Naive thymus-derived CD4-positive, alpha-beta T cell (primary cell): ENCODE measurements at regions of chr11 and their contacts with region 1.

Region 1: DNA sequence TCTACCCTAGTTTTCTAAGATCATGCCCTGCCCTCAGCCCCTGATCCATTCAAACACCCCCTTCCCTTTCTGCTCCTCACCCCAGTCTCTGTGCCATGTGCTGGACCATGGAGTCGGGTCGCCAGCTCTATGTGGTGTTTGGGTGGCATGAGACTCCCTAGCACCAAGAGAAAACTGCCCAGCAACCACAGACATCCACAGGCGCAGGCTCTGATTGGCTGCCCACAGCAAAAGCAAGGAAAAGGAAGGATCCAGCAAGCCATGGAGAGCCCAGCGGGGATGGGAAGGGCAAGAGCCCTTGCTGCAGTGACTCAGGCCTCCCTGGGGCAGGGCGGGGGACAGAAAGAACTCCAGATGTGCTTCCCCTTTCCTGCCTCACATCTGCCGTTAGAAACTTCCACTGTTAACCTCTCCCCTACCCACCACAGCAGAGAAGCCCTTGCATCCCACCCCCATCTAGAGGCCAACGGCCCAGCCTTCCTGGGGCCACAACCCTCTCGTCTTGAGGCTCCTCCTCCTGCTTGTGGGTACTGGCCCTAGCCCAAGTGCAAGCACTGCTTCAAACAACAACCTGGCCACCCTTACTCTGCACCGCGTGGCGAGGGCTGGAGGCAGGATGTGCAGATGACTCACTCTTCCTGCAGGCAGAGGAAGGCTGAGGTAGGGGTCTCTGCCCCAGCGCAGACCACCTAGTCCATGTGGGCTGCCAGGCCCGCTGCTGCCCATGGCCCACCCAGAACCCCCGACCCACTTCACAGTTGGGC is 9.7 kb upstream of the AHNAK start:
- DNase-seq: peak; percentile 58 to 82 (median 72)
- ATAC-seq: peak; percentile 48
- H3K4me3 ChIP-seq: peak overlapping the region; percentile 42
- H3K4me3 Mint-ChIP-seq: peak overlapping the region; percentile 65 to 87 (median 78)
- H3K27ac ChIP-seq: peak overlapping the region; percentile 87
- H3K27ac Mint-ChIP-seq: peak overlapping the region; percentile 87 to 100 (median 98)
- H3K4me1 ChIP-seq: peaks cover 69 to 84% of the 10 kb centered on the region in 2 donors
- H3K4me1 Mint-ChIP-seq: peaks cover 62 to 88% (median 81%) of the 10 kb centered on the region in 7 donors
- H3K27me3 ChIP-seq: no peaks in the 10 kb centered on the region
- H3K27me3 Mint-ChIP-seq: peaks cover 0 to 2% (median 0%) of the 10 kb centered on the region in 5 donors

Region 2: GRCh38 chr11:61028272-61028761 is 1528.0 kb before region 1 on chr11:
- CTCF ChIA-PET with region 1: no interaction called
- POLR2A ChIA-PET with region 1: no interaction called
- intact Hi-C with region 1: loop called in 1 of 2 experiments (anchors 10 kb)
- DNase-seq: peak in 3 of 9 donors; percentile 46 to 80 (median 60)
- ATAC-seq: peak; percentile 6
- H3K4me3 ChIP-seq: peak overlapping the region; percentile 30
- H3K4me3 Mint-ChIP-seq: peak overlapping the region; percentile 78 to 91 (median 86)
- H3K27ac ChIP-seq: peak overlapping the region; percentile 76
- H3K27ac Mint-ChIP-seq: peak overlapping the region; percentile 91 to 99 (median 97)
- H3K4me1 ChIP-seq: peaks cover 43 to 56% of the 10 kb centered on the region in 2 donors
- H3K4me1 Mint-ChIP-seq: peaks cover 62 to 97% (median 90%) of the 10 kb centered on the region in 7 donors
- H3K27me3 ChIP-seq: no peaks in the 10 kb centered on the region
- H3K27me3 Mint-ChIP-seq: no peaks in the 10 kb centered on the region

Region 3: DNA sequence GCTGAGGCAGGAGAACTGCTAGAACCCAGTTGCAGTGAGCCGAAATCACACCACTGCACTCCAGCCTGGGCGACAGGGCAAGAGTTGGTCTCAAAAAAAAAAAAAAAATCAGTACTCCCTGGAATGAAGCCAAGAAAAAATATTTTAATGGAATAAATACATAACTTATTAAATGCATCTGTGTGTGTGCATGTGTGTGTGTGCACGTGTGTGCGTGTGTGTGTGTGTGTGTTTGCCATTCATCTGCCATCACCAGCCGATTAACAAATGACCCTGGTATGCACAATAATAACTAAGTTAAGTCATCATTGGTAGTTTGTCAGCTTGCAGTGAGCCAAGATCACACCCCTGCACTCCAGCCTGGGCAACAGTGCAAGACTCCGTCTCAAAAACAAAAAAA is 172.5 kb before region 1 on chr11:
- CTCF ChIA-PET with region 1: interaction called, 3 read pairs
- POLR2A ChIA-PET with region 1: no interaction called
- intact Hi-C with region 1: loop called in 1 of 2 experiments (anchors 1 kb)
- DNase-seq: no peak
- ATAC-seq: no peak
- H3K4me3 ChIP-seq: no peak overlapping the region
- H3K4me3 Mint-ChIP-seq: no peak overlapping the region
- H3K27ac ChIP-seq: no peak overlapping the region
- H3K27ac Mint-ChIP-seq: no peak overlapping the region
- H3K4me1 ChIP-seq: peaks cover 0 to 6% of the 10 kb centered on the region in 2 donors
- H3K4me1 Mint-ChIP-seq: peaks cover 0 to 28% (median 4%) of the 10 kb centered on the region in 7 donors
- H3K27me3 ChIP-seq: no peaks in the 10 kb centered on the region
- H3K27me3 Mint-ChIP-seq: peaks cover 0 to 15% (median 0%) of the 10 kb centered on the region in 5 donors

Region 4: DNA sequence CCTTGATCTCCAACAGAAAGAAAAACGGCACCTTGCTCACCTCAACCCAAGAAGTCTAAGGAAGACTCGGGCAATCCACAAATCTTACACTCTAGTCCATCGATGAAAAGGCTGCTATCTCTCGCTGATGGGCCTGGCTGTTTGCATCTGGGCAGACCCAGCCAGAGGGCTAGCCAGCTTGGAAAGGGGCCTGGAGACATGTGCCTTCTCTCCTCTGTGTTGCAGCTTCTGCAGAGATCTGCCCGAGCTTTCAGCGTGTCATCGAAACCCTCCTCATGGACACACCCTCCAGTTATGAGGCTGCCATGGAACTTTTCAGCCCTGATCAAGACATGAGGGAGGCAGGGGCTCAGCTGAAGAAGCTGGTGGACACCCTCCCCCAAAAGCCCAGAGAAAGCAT is 134.3 kb before region 1 on chr11:
- CTCF ChIA-PET with region 1: interaction called, 125 read pairs
- POLR2A ChIA-PET with region 1: interaction called, 6 read pairs
- intact Hi-C with region 1: loop called (anchors 1 kb)
- DNase-seq: no peak
- ATAC-seq: no peak
- H3K4me3 ChIP-seq: no peak overlapping the region
- H3K4me3 Mint-ChIP-seq: no peak overlapping the region
- H3K27ac ChIP-seq: no peak overlapping the region
- H3K27ac Mint-ChIP-seq: peak overlapping the region in 1 of 9 donors; percentile 20
- H3K4me1 ChIP-seq: peaks cover 9 to 11% of the 10 kb centered on the region in 2 donors
- H3K4me1 Mint-ChIP-seq: peaks cover 6 to 21% (median 12%) of the 10 kb centered on the region in 7 donors
- H3K27me3 ChIP-seq: no peaks in the 10 kb centered on the region
- H3K27me3 Mint-ChIP-seq: peaks cover 0 to 7% (median 0%) of the 10 kb centered on the region in 5 donors

Region 5: DNA sequence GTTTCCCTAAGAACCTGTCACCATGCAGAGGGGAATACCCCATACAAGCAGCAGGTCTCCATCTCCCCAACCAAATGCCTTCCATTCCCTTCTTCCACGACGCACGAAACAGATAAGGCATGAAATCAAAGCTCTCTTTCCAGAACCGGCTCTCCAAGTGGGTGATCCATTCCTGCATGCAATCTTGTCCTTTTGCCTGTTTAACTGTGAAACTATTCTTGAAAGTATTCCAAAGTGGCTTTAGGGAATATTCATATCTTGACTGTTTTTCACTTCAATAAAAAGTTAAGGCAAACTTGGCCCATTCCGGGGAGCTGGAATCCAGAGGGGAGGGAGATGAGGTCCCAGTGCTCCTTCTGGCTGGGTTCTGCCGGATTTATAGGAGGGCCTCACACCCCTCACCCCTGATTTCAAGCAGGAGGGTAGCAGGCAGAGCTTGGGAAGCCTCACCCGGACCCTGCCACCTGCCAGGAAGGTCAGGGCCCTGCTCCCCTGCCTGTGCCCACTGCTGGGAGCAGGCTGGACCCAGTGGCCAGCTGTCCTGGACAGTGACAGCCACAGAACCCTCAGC is 76.6 kb before region 1 on chr11:
- CTCF ChIA-PET with region 1: no interaction called
- POLR2A ChIA-PET with region 1: no interaction called
- intact Hi-C with region 1: no loop called
- DNase-seq: no peak
- ATAC-seq: no peak
- H3K4me3 ChIP-seq: no peak overlapping the region
- H3K4me3 Mint-ChIP-seq: no peak overlapping the region
- H3K27ac ChIP-seq: no peak overlapping the region
- H3K27ac Mint-ChIP-seq: no peak overlapping the region
- H3K4me1 ChIP-seq: no peaks in the 10 kb centered on the region
- H3K4me1 Mint-ChIP-seq: peaks cover 0 to 4% (median 0%) of the 10 kb centered on the region in 7 donors
- H3K27me3 ChIP-seq: no peaks in the 10 kb centered on the region
- H3K27me3 Mint-ChIP-seq: no peaks in the 10 kb centered on the region

Region 6: GRCh38 chr11:62542750-62543567 is 13.3 kb before region 1 on chr11:
- CTCF ChIA-PET with region 1: interaction called, 62 read pairs
- POLR2A ChIA-PET with region 1: interaction called, 72 read pairs
- intact Hi-C with region 1: loop called (anchors 1 kb)
- DNase-seq: peak; percentile 37 to 84 (median 66)
- ATAC-seq: peak; percentile 61
- H3K4me3 ChIP-seq: peak overlapping the region; percentile 87
- H3K4me3 Mint-ChIP-seq: peak overlapping the region; percentile 48 to 100 (median 75)
- H3K27ac ChIP-seq: peak overlapping the region; percentile 84
- H3K27ac Mint-ChIP-seq: peak overlapping the region; percentile 2 to 95 (median 70)
- H3K4me1 ChIP-seq: peaks cover 39 to 56% of the 10 kb centered on the region in 2 donors
- H3K4me1 Mint-ChIP-seq: peaks cover 36 to 82% (median 63%) of the 10 kb centered on the region in 7 donors
- H3K27me3 ChIP-seq: no peaks in the 10 kb centered on the region
- H3K27me3 Mint-ChIP-seq: peaks cover 0 to 5% (median 0%) of the 10 kb centered on the region in 5 donors

Region 7: DNA sequence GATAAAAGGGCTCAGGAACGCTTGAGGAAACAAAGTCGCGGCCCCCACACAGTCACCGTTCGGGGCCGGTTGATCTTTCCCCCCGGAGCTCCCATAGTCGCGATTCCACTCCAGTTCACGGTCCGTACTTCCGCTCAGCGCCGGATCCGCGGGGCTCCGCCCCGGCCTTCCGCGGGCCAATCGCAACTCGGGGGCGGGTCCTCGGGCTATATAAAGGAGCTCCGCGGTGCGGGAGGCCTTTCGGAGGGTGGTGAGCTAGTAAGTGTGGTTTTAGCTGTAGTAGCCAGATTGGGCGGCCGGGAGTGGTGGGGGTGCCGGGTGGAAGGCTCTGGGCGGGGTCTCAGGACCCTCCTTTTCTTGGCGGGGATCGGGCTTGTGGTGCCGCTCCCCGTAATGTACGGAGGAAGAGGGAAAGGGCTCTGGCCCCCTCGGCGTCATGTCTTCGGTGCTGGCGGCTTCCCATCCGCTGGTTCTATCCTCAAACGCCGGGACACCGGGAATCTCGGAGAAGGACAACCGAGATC is 108.8 kb after region 1 on chr11 and contains the starts of genes C11orf98 and CSKMT:
- CTCF ChIA-PET with region 1: no interaction called
- POLR2A ChIA-PET with region 1: interaction called, 17 read pairs
- intact Hi-C with region 1: no loop called
- DNase-seq: peak; percentile 90 to 99 (median 95)
- ATAC-seq: peak; percentile 97
- H3K4me3 ChIP-seq: peak within 1 kb of the TSS; percentile 85
- H3K4me3 Mint-ChIP-seq: peak within 1 kb of the TSS; percentile 93 to 98 (median 96)
- H3K27ac ChIP-seq: peak within 1 kb of the TSS; percentile 85
- H3K27ac Mint-ChIP-seq: peak within 1 kb of the TSS; percentile 89 to 97 (median 93)
- H3K4me1 ChIP-seq: peaks cover 16 to 21% of the 10 kb centered on the region in 2 donors
- H3K4me1 Mint-ChIP-seq: peaks cover 13 to 45% (median 32%) of the 10 kb centered on the region in 7 donors
- H3K27me3 ChIP-seq: no peaks in the 10 kb centered on the region
- H3K27me3 Mint-ChIP-seq: no peaks in the 10 kb centered on the region
- total RNA-seq, gene C11orf98: 23.2 to 103 (median 47.6) TPM
- total RNA-seq, gene CSKMT: 8.9 to 29.3 (median 23.7) TPM

Region 8: GRCh38 chr11:62880803-62881578 is 324.7 kb after region 1 on chr11 and contains the start of gene SLC3A2:
- CTCF ChIA-PET with region 1: no interaction called
- POLR2A ChIA-PET with region 1: interaction called, 6 read pairs
- intact Hi-C with region 1: loop called in 1 of 2 experiments (anchors 2 kb)
- DNase-seq: peak; percentile 80 to 90 (median 87)
- ATAC-seq: peak; percentile 88
- H3K4me3 ChIP-seq: peak within 1 kb of the TSS; percentile 97
- H3K4me3 Mint-ChIP-seq: peak within 1 kb of the TSS; percentile 98 to 100 (median 100)
- H3K27ac ChIP-seq: peak within 1 kb of the TSS; percentile 94
- H3K27ac Mint-ChIP-seq: peak within 1 kb of the TSS; percentile 98 to 100 (median 99)
- H3K4me1 ChIP-seq: peaks cover 34 to 35% of the 10 kb centered on the region in 2 donors
- H3K4me1 Mint-ChIP-seq: peaks cover 34 to 60% (median 53%) of the 10 kb centered on the region in 7 donors
- H3K27me3 ChIP-seq: no peaks in the 10 kb centered on the region
- H3K27me3 Mint-ChIP-seq: peaks cover 0 to 4% (median 0%) of the 10 kb centered on the region in 5 donors
- total RNA-seq, gene SLC3A2: 159 to 239 (median 218) TPM